Activated CD4-positive, alpha-beta T cell treated with anti-CD3 and anti-CD28 coated beads for 36 hours (primary cell): ENCODE measurements at regions of chr13 and their contacts with region 1.

Region 1: GRCh38 chr13:102845630-102846260 is at the start of gene ERCC5:
- DNase-seq: peak; percentile 97
- ATAC-seq: peak; percentile 87
- H3K4me3 Mint-ChIP-seq: peak within 1 kb of the TSS; percentile 99
- H3K27ac Mint-ChIP-seq: peak within 1 kb of the TSS; percentile 98
- H3K4me1 Mint-ChIP-seq: peaks cover 32% of the 10 kb centered on the region
- H3K27me3 Mint-ChIP-seq: no peaks in the 10 kb centered on the region
- total RNA-seq, gene ERCC5: 74.8 to 79.1 TPM

Region 2: GRCh38 chr13:102580552-102581169 is 265.1 kb before region 1 on chr13:
- CTCF ChIA-PET with region 1: interaction called, 12 read pairs
- POLR2A ChIA-PET with region 1: no interaction called
- intact Hi-C with region 1: loop called (anchors 1 kb)
- DNase-seq: peak; percentile 35
- ATAC-seq: peak; percentile 78
- H3K4me3 Mint-ChIP-seq: no peak overlapping the region
- H3K27ac Mint-ChIP-seq: no peak overlapping the region
- H3K4me1 Mint-ChIP-seq: peaks cover 7% of the 10 kb centered on the region
- H3K27me3 Mint-ChIP-seq: peaks cover 7% of the 10 kb centered on the region

Region 3: DNA sequence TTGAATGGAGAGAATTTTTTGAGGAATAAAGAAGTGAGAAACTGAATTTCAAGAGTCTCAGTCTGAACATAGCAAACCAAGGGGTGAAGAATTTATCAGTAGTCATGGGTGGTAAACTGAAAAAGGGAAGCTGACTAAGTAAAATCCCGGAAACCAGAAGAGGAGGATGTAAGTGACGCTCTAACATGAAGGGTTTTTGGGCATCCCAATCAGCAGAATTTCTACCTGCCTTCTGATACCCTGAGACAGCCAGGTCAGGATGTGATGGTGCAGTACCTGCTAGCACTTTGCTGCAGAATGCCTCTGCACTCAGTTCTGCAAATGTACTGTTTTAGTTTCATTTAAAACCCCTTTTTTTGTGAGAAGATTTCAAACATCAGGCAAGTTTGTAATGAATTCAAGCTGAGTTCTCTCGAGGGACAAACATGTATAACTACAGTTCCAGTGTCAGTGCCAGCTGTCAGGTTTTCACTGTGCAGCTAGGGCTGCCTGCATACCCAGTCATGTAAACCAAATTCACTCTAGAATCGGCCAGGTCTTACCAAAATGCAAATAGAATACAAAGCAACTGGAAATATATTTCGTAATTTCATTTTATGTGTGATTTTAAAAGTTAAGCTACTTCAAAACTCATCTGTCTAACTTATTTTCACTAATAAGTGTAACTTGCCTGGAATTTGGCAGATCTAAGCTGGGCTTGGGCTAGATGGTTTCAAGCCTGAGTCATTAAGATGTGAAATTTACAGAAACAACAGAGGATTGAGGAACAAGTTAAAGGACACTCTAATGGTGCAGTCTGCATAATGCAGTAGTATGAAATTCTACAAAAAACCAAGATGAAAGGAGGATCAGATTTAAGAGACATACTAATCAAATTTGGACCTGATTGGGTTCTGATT is 164.7 kb before region 1 on chr13:
- CTCF ChIA-PET with region 1: interaction called, 3 read pairs
- POLR2A ChIA-PET with region 1: no interaction called
- intact Hi-C with region 1: loop called in 1 of 2 experiments (anchors 2 kb)
- DNase-seq: no peak
- ATAC-seq: peak; percentile 67
- H3K4me3 Mint-ChIP-seq: no peak overlapping the region
- H3K27ac Mint-ChIP-seq: peak overlapping the region; percentile 61
- H3K4me1 Mint-ChIP-seq: peaks cover 26% of the 10 kb centered on the region
- H3K27me3 Mint-ChIP-seq: no peaks in the 10 kb centered on the region

Region 4: DNA sequence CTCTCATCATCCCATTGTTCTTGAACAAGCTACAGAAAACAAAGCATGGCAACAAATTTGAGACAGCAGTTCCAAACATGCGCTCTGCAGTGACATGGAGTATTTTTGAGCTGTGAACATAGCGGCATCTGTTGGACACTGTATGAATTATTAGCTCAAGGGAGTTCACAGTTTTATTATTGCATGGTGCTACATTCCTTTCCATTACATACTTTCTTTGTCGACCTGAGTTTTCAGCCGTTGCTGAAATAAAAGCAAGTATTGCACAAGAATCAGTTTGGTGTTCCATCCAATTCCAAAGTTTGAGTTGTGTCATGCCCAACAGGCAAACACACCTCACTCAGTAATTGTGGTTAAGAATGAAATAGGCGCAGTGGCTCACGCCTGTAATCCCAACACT is 120.8 kb before region 1 on chr13:
- CTCF ChIA-PET with region 1: no interaction called
- POLR2A ChIA-PET with region 1: no interaction called
- intact Hi-C with region 1: loop called in 1 of 2 experiments (anchors 5 kb)
- DNase-seq: peak; percentile 6
- ATAC-seq: no peak
- H3K4me3 Mint-ChIP-seq: no peak overlapping the region
- H3K27ac Mint-ChIP-seq: no peak overlapping the region
- H3K4me1 Mint-ChIP-seq: peaks cover 4% of the 10 kb centered on the region
- H3K27me3 Mint-ChIP-seq: peaks cover 11% of the 10 kb centered on the region

Region 5: GRCh38 chr13:102773441-102774215 is 72.1 kb before region 1 on chr13 and contains the start of gene TEX30:
- CTCF ChIA-PET with region 1: interaction called, 4 read pairs
- POLR2A ChIA-PET with region 1: interaction called, 7 read pairs
- intact Hi-C with region 1: loop called (anchors 1 kb)
- DNase-seq: peak; percentile 91
- ATAC-seq: peak; percentile 97
- H3K4me3 Mint-ChIP-seq: peak within 1 kb of the TSS; percentile 73
- H3K27ac Mint-ChIP-seq: peak within 1 kb of the TSS; percentile 93
- H3K4me1 Mint-ChIP-seq: peaks cover 48% of the 10 kb centered on the region
- H3K27me3 Mint-ChIP-seq: no peaks in the 10 kb centered on the region
- total RNA-seq, gene TEX30: 21.5 to 25.8 TPM

Region 6: GRCh38 chr13:102800145-102801041 is 45.4 kb before region 1 on chr13:
- CTCF ChIA-PET with region 1: interaction called, 11 read pairs
- POLR2A ChIA-PET with region 1: no interaction called
- intact Hi-C with region 1: loop called (anchors 1 kb)
- DNase-seq: peak; percentile 91
- ATAC-seq: peak; percentile 81
- H3K4me3 Mint-ChIP-seq: peak overlapping the region; percentile 89
- H3K27ac Mint-ChIP-seq: peak overlapping the region; percentile 73
- H3K4me1 Mint-ChIP-seq: peaks cover 26% of the 10 kb centered on the region
- H3K27me3 Mint-ChIP-seq: peaks cover 6% of the 10 kb centered on the region